ENCODE measurements at regions of chr14 and their contacts with region 1.

Region 1: DNA sequence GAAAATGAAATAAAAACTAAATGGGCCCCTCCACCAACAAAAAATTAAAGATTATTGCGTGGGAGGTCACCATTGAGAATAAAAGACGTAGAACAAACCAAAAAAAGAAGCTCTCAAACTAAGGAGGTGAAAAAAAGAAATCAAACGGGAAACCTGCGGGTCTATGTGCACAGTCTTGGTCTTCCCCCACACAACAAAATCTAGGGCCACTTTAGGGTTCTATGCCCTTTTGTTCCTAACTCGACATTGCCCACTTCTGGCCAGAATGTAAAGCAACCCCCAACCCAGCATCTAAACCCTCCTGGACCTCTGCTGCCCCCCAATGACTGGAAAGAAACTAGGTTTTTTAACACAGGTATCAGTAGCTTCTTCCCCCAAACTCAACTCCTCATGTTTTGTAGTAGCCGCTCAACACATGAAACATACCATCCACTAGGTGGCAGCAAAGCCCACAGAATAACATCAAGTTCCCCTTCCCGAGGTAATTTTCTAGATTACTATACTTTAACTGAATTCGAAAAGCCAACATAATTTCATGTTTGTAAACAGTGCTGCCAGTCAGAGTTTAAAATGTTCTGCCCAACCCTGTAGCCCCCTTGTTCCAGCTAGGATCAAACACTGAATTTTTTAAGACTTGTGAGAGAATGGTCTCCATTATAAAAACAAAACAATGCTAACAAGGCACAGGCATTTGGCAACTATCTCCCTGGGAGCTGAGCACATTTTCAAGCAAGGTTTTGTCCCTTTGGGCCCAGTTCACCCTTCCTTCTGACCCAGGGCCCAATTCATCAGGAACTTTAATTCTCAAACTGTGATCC is 18.7 kb downstream of the DAD1 start:
- DNase-seq: peak; percentile 94
- ATAC-seq: peak; percentile 87
- H3K4me3 Mint-ChIP-seq: peak overlapping the region; percentile 80
- H3K27ac Mint-ChIP-seq: peak overlapping the region; percentile 92
- H3K4me1 Mint-ChIP-seq: peaks cover 62% of the 10 kb centered on the region
- H3K27me3 Mint-ChIP-seq: no peaks in the 10 kb centered on the region

Region 2: GRCh38 chr14:21978184-21978998 is 592.0 kb before region 1 on chr14:
- CTCF ChIA-PET with region 1: interaction called, 31 read pairs
- POLR2A ChIA-PET with region 1: interaction called, 5 read pairs
- DNase-seq: peak; percentile 77
- ATAC-seq: peak; percentile 84
- H3K4me3 Mint-ChIP-seq: peak overlapping the region; percentile 69
- H3K27ac Mint-ChIP-seq: peak overlapping the region; percentile 53
- H3K4me1 Mint-ChIP-seq: peaks cover 23% of the 10 kb centered on the region
- H3K27me3 Mint-ChIP-seq: peaks cover 27% of the 10 kb centered on the region

Region 3: DNA sequence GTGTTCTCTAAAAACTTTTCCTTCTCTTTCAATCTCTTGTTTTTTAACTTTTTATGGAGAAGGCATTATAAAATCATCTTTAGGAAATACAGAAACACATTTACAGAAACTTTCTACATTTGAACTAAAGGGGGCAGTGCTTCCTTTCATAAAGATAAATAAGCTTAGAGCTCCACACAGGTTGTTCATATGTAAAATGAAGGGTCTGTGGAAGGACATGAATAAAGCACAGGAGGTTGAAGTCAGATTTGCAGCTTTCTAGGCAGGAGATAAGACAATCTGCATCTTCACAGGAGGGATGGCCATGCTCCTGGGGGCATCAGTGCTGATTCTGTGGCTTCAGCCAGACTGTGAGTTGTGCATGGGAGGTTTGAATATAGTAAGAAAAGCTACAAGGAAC is 407.3 kb before region 1 on chr14:
- CTCF ChIA-PET with region 1: interaction called, 12 read pairs
- POLR2A ChIA-PET with region 1: no interaction called
- DNase-seq: no peak
- ATAC-seq: peak; percentile 58
- H3K4me3 Mint-ChIP-seq: peak overlapping the region; percentile 77
- H3K27ac Mint-ChIP-seq: peak overlapping the region; percentile 90
- H3K4me1 Mint-ChIP-seq: peaks cover 31% of the 10 kb centered on the region
- H3K27me3 Mint-ChIP-seq: no peaks in the 10 kb centered on the region

Region 4: DNA sequence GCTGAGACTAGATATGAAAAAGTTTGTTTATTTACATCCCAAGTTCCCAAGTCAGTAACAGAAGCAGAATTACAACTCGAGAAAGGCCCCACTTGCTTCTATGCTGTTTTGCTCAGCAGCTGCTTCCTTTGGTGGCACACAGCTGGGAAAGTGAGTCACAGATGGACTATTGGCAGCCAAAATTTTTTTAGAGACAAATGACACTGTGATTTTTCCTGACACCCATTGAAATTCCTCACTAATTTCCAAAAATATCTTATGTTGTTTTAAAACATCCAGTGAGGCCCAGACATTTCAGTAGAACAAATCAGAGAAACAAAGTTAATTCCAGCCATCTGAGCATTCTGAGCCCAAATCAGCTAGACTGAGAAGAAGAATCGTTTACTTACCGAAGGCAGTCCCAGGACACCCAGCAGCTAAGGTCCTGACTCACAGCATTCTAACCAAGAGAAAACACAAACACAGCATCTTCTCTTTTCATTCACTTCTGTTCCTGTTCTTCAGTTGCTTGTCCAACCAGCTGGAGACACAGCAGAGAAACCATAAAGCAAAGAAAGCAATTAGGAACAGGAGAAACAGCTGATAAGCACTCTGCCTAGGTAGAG is 169.6 kb before region 1 on chr14:
- CTCF ChIA-PET with region 1: no interaction called
- POLR2A ChIA-PET with region 1: no interaction called
- DNase-seq: no peak
- ATAC-seq: no peak
- H3K4me3 Mint-ChIP-seq: no peak overlapping the region
- H3K27ac Mint-ChIP-seq: no peak overlapping the region
- H3K4me1 Mint-ChIP-seq: no peaks in the 10 kb centered on the region
- H3K27me3 Mint-ChIP-seq: no peaks in the 10 kb centered on the region

Region 5: DNA sequence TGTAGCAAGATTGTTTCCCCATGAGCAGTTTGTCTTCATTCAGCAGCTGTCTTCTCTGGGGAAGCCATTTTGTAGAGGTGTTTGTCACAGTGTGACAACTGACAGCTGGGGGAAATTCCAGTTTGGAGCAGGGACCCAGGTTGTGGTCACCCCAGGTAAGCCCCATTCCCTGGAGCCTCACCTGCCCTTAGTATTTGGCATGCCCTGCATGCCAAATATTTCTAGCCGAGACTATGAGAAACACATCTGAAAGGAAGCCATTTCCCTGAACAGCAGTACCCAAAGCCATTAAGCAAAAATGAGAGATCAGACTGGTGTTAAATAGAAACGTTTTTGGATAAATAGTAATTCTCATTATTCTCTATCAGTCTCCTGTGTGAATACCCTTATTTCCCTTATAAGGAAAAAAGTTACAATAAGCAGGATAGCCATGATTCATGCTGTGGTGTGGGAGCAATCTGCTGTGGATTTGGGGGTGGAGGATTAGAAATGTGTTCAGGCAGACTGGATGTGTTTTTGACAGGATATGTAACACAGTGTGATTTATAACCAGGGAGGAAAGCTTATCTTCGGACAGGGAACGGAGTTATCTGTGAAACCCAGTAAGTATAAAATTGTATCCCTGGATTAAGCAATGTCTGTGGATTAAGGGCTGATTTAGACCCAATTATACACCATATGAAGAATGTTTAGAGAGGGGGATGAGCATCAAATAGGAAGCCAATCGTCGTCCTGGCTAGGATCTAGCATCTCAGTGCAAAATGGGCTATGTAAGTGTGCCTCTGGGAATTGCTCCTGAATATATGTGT is 50.3 kb before region 1 on chr14:
- CTCF ChIA-PET with region 1: interaction called, 35 read pairs
- POLR2A ChIA-PET with region 1: interaction called, 232 read pairs
- DNase-seq: no peak
- ATAC-seq: peak; percentile 5
- H3K4me3 Mint-ChIP-seq: peak overlapping the region; percentile 89
- H3K27ac Mint-ChIP-seq: peak overlapping the region; percentile 96
- H3K4me1 Mint-ChIP-seq: peaks cover 92% of the 10 kb centered on the region
- H3K27me3 Mint-ChIP-seq: no peaks in the 10 kb centered on the region

Region 6: DNA sequence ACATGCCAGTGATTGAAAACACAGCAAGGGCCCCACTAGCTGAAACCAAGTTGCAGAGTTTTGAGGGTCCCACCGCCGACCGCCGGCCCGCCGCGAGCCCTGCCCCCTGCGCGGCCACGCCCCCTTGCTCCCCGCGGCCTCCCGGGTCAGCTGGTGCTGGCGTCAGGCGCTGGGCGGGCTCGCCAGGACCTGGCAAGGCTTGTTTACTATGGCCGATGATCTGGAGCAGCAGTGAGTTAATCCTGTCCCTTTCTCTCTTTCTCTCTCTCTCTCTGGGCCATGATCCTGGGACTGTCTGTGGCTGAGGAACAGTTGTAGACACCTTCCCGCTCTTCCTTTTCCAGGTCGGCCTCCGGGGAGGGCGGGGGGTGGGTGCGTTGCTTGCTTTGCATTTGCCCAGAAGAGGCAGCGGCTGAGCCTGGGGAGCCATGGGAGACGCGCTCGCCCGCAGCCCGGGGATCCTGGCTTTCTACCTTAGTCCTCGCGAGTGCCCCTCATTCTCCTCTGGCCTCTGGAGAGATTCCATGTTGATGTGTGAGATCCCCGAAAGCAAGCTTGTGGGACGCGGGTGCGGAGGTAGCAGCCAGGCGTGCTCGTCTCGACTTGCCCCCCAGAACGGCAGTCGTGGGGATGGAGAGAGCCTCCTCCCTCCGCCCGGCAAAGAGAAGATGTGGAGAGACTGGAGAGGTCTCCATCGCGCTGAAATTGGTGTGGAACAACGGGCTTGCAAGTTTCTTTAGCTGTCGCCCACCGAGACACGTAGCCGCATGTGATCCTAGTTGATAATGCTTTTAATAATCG is 28.0 kb after region 1 on chr14 and contains the start of gene ABHD4:
- CTCF ChIA-PET with region 1: interaction called, 123 read pairs
- POLR2A ChIA-PET with region 1: interaction called, 3 read pairs
- DNase-seq: peak; percentile 77
- ATAC-seq: peak; percentile 91
- H3K4me3 Mint-ChIP-seq: peak within 1 kb of the TSS; percentile 92
- H3K27ac Mint-ChIP-seq: peak within 1 kb of the TSS; percentile 84
- H3K4me1 Mint-ChIP-seq: peaks cover 30% of the 10 kb centered on the region
- H3K27me3 Mint-ChIP-seq: peaks cover 19% of the 10 kb centered on the region
- total RNA-seq, gene ABHD4: 8.0 to 8.5 TPM

Region 7: GRCh38 chr14:22852940-22853767 is 282.8 kb after region 1 on chr14:
- CTCF ChIA-PET with region 1: interaction called, 123 read pairs
- POLR2A ChIA-PET with region 1: interaction called, 7 read pairs
- DNase-seq: peak; percentile 91
- ATAC-seq: peak; percentile 87
- H3K4me3 Mint-ChIP-seq: peak overlapping the region; percentile 72
- H3K27ac Mint-ChIP-seq: peak overlapping the region; percentile 61
- H3K4me1 Mint-ChIP-seq: peaks cover 44% of the 10 kb centered on the region
- H3K27me3 Mint-ChIP-seq: peaks cover 18% of the 10 kb centered on the region

Region 8: DNA sequence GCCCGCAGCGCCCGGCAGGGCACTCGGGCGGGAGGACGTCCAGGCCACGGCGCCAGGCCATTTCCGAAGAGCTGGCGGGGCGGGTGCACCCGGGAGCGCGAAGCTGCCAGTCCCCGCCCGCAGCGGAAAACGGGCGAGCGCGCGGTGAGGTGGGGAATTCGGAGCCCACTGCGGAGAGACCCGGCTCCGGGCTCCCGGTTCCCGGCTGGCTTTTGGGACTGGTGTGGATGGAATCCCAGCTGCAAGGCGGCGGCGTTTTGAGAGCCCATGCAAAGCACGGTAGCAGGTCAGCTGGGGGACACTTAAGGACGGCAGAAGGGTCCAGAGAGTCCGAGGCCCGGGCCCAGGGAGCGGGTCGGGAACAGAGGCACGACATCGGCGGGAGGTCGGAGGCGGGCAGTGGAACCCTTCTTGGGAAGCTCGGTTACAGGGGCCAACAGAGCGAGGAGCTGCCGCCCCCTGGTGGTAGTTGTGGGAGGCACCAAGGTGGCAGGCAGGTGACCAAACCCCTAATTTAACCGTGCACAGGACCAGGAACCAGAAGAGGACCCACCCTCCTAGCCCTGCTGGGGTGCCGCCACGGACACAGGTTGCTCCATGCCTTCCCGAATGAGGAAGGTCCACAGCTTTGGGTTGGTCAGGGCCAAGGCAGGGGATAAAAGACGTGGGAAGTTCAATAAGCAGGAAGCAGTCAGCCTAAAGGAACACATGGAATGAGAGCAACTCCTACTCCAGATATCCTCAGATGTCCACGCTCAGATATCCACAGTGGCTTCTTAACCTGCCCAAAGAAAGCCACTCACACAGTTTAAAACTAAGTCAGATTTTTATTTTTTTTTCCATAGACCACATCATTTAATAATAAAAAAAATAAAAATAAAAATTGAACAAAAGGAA is 487.7 kb after region 1 on chr14:
- CTCF ChIA-PET with region 1: interaction called, 10 read pairs
- POLR2A ChIA-PET with region 1: no interaction called
- DNase-seq: peak; percentile 91
- ATAC-seq: peak; percentile 76
- H3K4me3 Mint-ChIP-seq: peak overlapping the region; percentile 83
- H3K27ac Mint-ChIP-seq: peak overlapping the region; percentile 34
- H3K4me1 Mint-ChIP-seq: peaks cover 18% of the 10 kb centered on the region
- H3K27me3 Mint-ChIP-seq: peaks cover 9% of the 10 kb centered on the region

Measured in activated CD8-positive, alpha-beta T cell treated with anti-CD3 and anti-CD28 coated beads, Interleukin-2, amount 10 ng/mL, durations not matched to agents 7 days and 5 days (primary cell).